ENCODE measurements at regions of chr19 and their contacts with region 1.

Region 1: GRCh38 chr19:43743022-43743421 is 11.7 kb downstream of the SMG9 start:
- DNase-seq: no peak
- ATAC-seq: no peak
- H3K4me3 Mint-ChIP-seq: no peak overlapping the region
- H3K27ac Mint-ChIP-seq: no peak overlapping the region
- H3K4me1 Mint-ChIP-seq: peaks cover 8% of the 10 kb centered on the region
- H3K27me3 Mint-ChIP-seq: no peaks in the 10 kb centered on the region
- CTCF ChIP-seq: no peak

Region 2: GRCh38 chr19:43668406-43669158 is 74.4 kb before region 1 on chr19:
- CTCF ChIA-PET with region 1: interaction called, 24 read pairs
- POLR2A ChIA-PET with region 1: no interaction called
- intact Hi-C with region 1: no loop called
- DNase-seq: peak; percentile 99
- ATAC-seq: peak; percentile 90
- H3K4me3 Mint-ChIP-seq: peak overlapping the region; percentile 85
- H3K27ac Mint-ChIP-seq: peak overlapping the region; percentile 71
- H3K4me1 Mint-ChIP-seq: peaks cover 38% of the 10 kb centered on the region
- H3K27me3 Mint-ChIP-seq: no peaks in the 10 kb centered on the region
- CTCF ChIP-seq: no peak

Region 3: DNA sequence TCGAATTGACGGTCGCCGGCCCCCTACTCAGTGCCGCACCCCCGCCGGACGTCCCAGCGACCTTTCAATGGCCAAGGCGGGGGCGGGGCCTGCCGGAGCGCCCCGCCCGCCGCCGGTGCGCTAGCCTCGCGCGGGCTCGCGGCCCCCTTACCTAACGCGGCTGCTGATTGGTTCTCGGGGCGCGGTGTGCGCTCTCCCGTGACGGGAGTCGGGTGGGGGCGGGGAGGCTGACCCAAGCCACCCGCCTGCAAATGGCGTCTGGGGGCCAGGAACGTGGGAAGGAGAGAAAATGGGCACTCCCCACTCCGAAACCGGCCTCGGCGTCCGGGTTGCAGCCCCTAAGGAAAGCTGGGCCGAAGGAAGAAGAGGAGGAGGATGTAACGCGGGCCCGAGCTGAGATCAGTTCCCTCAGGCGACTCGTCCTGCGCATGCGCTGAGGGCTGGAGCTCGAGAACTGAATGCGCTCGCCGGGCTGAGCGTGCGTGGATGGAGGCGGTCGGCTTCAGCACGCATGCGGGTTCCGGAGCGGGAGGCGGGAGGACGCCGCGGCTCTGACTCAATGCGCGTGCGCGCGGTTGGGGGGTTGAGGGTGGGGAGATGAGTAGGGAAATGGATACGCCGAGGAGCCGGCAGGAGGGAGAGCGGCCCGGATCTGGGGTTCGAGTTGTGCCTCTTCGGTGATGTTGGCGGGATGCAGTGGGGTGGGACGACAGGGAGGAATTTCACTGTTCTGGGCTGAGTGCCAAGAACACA is 11.7 kb after region 1 on chr19 and contains the start of gene SMG9:
- CTCF ChIA-PET with region 1: interaction called, 13 read pairs
- POLR2A ChIA-PET with region 1: interaction called, 13 read pairs
- intact Hi-C with region 1: no loop called
- DNase-seq: peak; percentile 97
- ATAC-seq: peak; percentile 85
- H3K4me3 Mint-ChIP-seq: peak within 1 kb of the TSS; percentile 90
- H3K27ac Mint-ChIP-seq: peak within 1 kb of the TSS; percentile 98
- H3K4me1 Mint-ChIP-seq: peaks cover 54% of the 10 kb centered on the region
- H3K27me3 Mint-ChIP-seq: no peaks in the 10 kb centered on the region
- CTCF ChIP-seq: no peak
- total RNA-seq, gene SMG9: 48.9 to 53.1 TPM

Region 4: DNA sequence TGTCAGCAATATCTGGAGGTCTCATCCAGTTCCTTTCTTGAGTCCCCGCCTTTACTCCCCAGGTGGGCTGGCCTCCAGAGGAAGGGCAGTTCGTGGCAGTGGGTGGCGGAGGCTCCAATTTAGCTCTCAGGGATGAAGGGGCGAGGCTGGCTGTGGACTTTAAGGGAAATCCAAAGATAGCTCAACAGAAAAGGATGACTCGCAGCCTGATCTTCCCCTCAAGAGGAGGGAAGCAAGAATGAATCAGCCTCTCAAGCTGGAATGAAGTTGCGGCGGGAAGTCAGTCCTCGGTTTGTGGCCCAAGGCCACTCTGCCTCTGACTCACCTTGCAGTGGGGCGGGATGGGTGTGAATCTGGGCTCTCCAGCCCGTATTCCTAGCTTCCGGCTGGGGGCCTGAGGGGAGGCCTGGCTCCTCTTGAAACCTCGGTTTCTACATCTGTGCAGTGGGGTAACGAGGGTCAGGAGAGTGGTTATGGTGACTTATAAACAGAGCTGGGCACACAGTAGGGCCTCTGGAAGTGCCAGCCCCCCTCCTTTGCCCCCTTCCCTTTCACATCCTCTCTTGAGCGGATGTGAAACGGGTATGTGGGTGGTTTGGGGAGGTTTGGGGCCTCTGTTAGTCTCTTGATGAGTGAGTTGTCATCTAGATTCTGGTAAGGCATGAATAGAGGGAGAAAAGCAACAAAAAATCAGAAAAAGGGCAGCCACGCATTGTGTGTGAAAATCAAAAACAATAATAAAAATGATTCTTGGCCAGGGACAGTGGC is 22.3 kb after region 1 on chr19:
- CTCF ChIA-PET with region 1: interaction called, 21 read pairs
- POLR2A ChIA-PET with region 1: interaction called, 5 read pairs
- intact Hi-C with region 1: no loop called
- DNase-seq: peak; percentile 95
- ATAC-seq: peak; percentile 83
- H3K4me3 Mint-ChIP-seq: peak overlapping the region; percentile 43
- H3K27ac Mint-ChIP-seq: peak overlapping the region; percentile 95
- H3K4me1 Mint-ChIP-seq: peaks cover 66% of the 10 kb centered on the region
- H3K27me3 Mint-ChIP-seq: no peaks in the 10 kb centered on the region
- CTCF ChIP-seq: no peak

Region 5: GRCh38 chr19:43784981-43785808 is 42.2 kb after region 1 on chr19:
- CTCF ChIA-PET with region 1: interaction called, 26 read pairs
- POLR2A ChIA-PET with region 1: interaction called, 6 read pairs
- intact Hi-C with region 1: loop called (anchors 1 kb)
- DNase-seq: peak; percentile 71
- ATAC-seq: peak; percentile 23
- H3K4me3 Mint-ChIP-seq: peak overlapping the region; percentile 67
- H3K27ac Mint-ChIP-seq: peak overlapping the region; percentile 94
- H3K4me1 Mint-ChIP-seq: peaks cover 39% of the 10 kb centered on the region
- H3K27me3 Mint-ChIP-seq: peaks cover 6% of the 10 kb centered on the region
- CTCF ChIP-seq: peak; percentile 95

Region 6: GRCh38 chr19:43798546-43799409 is 55.8 kb after region 1 on chr19:
- CTCF ChIA-PET with region 1: interaction called, 11 read pairs
- POLR2A ChIA-PET with region 1: no interaction called
- intact Hi-C with region 1: no loop called
- DNase-seq: peak; percentile 92
- ATAC-seq: peak; percentile 96
- H3K4me3 Mint-ChIP-seq: peak overlapping the region; percentile 73
- H3K27ac Mint-ChIP-seq: peak overlapping the region; percentile 27
- H3K4me1 Mint-ChIP-seq: peaks cover 12% of the 10 kb centered on the region
- H3K27me3 Mint-ChIP-seq: peaks cover 12% of the 10 kb centered on the region
- CTCF ChIP-seq: no peak

Region 7: DNA sequence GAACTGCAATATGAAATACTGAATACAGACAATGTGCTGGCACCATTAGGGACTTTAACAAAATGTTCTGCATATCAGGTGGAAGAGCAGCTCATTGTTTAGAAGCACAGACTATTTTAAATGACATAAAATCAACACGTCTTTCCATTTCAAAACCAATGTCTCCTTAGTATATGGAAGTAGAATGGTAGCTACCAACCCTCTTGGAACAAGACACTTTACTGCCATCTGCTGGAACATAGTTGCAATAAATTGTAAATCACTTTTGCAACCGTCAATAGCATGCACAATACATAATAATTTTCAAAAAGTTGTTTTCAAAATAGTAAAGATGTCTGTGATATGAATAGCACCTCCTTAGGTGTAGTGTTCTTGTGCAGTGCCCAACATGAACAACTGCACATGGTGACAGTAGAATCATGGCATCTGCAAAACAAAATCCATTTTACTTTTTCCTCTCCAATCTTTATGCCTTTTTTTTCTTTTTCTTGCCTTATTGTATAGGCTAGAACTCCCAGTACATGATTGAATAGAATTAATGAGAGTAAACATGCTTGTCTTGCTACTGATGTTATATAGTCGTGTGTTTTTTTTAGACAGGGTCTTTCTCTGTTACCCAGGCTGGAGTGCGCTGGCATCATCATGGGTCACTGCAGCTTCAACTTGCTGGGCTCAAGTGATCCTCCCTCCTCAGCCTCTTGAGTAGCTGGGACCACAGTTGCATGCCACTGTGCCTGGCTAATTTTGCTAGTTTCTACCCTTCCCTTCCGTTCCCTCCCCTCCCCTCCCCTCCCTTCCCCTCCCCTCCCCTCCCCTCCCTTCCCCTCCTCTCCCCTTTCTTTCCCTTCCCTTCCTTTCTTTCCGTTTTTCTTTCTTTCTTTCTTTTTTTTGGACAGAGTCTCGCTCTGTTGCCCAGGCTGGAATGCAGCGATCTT is 67.0 kb after region 1 on chr19:
- CTCF ChIA-PET with region 1: interaction called, 29 read pairs
- POLR2A ChIA-PET with region 1: no interaction called
- intact Hi-C with region 1: no loop called
- DNase-seq: no peak
- ATAC-seq: peak; percentile 70
- H3K4me3 Mint-ChIP-seq: no peak overlapping the region
- H3K27ac Mint-ChIP-seq: no peak overlapping the region
- H3K4me1 Mint-ChIP-seq: no peaks in the 10 kb centered on the region
- H3K27me3 Mint-ChIP-seq: peaks cover 7% of the 10 kb centered on the region
- CTCF ChIP-seq: peak; percentile 74

Measured in activated CD8-positive, alpha-beta T cell treated with anti-CD3 and anti-CD28 coated beads for 36 hours (primary cell).